ENCODE measurements at regions of chr11 and their contacts with region 1.

Region 1: DNA sequence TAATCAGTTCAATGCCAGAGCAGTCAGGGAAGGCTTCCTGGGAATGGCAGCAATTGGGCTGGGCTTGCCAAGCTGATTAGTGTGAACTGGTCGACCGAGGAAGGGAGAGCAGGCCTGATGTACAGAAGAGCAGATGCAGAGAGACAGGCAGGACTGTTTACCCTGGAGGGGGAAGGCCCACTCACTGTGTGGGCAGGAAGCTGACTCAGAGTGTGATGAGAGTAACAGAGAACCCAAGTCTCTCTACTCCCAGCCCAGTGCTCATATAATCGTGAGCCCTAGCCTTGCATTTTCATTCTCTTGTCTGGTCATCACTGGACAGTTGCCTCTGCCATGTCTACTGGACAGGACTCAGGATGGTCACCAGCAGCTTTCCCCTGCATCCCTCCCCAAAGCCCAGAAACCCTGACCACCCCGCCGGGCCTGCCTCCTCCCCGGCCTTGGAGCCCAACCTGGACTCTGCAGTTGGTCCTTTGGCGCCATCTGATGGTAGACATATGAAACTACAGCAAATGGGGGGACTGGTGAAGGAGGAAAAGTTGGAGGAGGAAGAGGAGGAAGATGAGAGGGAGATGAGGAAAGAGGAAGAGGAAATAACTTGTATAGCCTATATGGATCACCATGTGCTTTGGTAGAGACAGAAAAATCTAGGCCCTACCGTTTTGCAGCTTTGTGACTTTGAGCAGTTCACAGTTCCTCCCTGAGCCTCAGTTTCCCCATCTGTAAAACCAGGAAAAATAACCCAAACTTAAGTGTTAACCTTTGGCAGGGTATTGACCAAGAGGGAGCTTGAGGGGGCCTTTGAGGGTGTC is 43.4 kb upstream of the PRDM11 start:
- DNase-seq: peak; percentile 77
- CTCF ChIP-seq: peak; percentile 91

Region 2: DNA sequence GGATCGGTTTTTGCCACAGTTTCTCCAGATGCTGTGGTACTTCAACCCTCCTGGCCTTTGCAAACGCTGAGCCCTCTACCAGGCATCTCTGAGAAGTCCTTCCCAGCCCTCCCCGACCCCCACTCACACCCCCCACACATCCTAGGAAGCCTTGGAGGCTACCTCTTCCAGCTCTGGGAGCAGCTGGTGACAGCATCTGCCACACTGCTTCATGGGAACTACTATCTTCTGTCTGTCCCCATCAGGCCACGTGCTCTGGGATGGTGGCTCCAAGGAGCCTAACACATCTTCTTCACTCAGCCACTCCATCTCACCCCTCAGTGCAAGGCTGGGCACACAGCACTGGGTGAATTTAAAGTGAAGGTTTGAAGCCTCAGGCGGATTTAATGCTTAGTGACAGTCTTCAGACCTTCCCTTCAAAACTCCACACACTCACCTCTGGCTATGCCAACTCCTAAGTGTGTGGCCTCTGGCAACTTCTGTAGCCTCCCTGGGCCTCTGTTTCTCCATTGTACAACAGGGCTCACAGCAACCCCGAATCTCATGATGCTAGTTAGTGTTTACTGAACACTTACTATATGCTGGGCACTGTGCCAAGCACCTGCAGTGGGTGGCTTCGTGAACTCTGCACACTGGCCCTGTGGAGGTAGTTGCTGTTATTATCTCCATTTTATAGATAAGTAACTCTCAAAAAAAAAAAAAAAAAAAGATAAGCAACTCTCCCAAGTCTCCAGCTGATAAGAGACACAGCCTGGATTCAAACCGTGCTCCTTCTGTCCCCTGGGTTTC is 145.0 kb before region 1 on chr11:
- CTCF ChIA-PET with region 1: interaction called, 11 read pairs
- POLR2A ChIA-PET with region 1: no interaction called
- DNase-seq: no peak
- CTCF ChIP-seq: no peak

Region 3: GRCh38 chr11:45079943-45080719 is 22.9 kb before region 1 on chr11:
- CTCF ChIA-PET with region 1: interaction called, 30 read pairs
- POLR2A ChIA-PET with region 1: no interaction called
- DNase-seq: peak; percentile 46
- CTCF ChIP-seq: no peak

Region 4: GRCh38 chr11:45285930-45286632 is 183.1 kb after region 1 on chr11 and contains the start of gene SYT13:
- CTCF ChIA-PET with region 1: interaction called, 42 read pairs
- POLR2A ChIA-PET with region 1: no interaction called
- DNase-seq: no peak
- CTCF ChIP-seq: no peak